Naive thymus-derived CD4-positive, alpha-beta T cell (primary cell): ENCODE measurements at regions of chr17 and their contacts with region 1.

Region 1: GRCh38 chr17:4625181-4625617 is 16.3 kb downstream of the ALOX15 start:
- DNase-seq: no peak
- ATAC-seq: no peak
- H3K4me3 ChIP-seq: no peak overlapping the region
- H3K4me3 Mint-ChIP-seq: no peak overlapping the region
- H3K27ac ChIP-seq: no peak overlapping the region
- H3K27ac Mint-ChIP-seq: no peak overlapping the region
- H3K4me1 ChIP-seq: no peaks in the 10 kb centered on the region
- H3K4me1 Mint-ChIP-seq: peaks cover 0 to 4% (median 0%) of the 10 kb centered on the region in 7 donors
- H3K27me3 ChIP-seq: no peaks in the 10 kb centered on the region
- H3K27me3 Mint-ChIP-seq: peaks cover 0 to 34% (median 5%) of the 10 kb centered on the region in 5 donors

Region 2: DNA sequence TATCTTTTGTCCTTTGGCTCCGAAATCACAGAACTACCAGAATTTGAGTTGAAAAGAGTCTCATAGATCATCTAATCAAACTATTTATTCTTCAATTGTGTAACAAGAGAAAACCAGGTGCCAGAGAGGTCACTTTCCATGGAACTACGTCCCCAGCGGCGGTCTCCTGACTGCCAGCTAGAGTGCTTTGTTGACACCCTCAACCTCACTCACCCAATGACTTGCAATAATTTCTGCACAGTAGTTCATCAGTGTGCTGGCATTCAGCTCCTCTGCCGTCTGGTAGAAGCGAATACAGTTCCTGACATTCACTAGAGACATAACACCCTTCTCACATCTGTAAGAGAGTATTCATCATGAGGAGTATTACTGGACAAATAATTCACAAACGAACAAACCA is 415.6 kb before region 1 on chr17:
- CTCF ChIA-PET with region 1: no interaction called
- POLR2A ChIA-PET with region 1: no interaction called
- intact Hi-C with region 1: loop called in 1 of 2 experiments (anchors 5 kb)
- DNase-seq: no peak
- ATAC-seq: no peak
- H3K4me3 ChIP-seq: no peak overlapping the region
- H3K4me3 Mint-ChIP-seq: no peak overlapping the region
- H3K27ac ChIP-seq: no peak overlapping the region
- H3K27ac Mint-ChIP-seq: no peak overlapping the region
- H3K4me1 ChIP-seq: no peaks in the 10 kb centered on the region
- H3K4me1 Mint-ChIP-seq: peaks cover 3 to 15% (median 8%) of the 10 kb centered on the region in 7 donors
- H3K27me3 ChIP-seq: no peaks in the 10 kb centered on the region
- H3K27me3 Mint-ChIP-seq: no peaks in the 10 kb centered on the region

Region 3: DNA sequence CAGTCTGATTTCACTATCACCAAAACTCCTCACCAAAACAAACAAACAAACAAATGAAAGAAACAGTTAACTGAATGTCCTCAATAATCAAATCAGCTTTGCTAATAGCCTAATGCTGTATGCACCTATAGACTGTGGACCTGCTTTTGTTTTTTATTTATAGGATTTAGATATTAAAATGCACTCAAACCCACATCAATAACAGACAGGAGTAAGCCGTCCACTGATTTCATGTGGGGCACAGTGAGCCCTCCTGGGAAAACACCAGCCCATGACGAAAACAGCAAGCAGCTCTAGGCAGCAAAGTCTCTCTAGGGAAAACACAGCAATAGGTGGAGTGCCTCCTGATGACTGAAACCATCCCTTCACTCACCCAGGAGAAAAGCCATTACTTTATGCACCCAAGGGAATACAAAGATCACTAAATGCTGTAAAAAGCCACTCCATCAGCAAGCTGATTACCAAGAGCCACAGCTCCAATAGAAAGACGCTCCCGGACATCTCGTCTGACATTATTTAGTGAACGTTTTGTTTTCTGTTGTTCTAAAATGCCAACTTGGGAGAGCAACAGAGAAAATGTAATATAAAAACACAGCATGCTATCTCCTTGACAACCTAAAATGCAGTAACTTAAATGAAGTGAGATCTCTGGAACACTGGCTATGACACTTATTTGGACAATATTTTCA is 409.2 kb before region 1 on chr17:
- CTCF ChIA-PET with region 1: no interaction called
- POLR2A ChIA-PET with region 1: no interaction called
- intact Hi-C with region 1: loop called (anchors 5 kb)
- DNase-seq: no peak
- ATAC-seq: no peak
- H3K4me3 ChIP-seq: no peak overlapping the region
- H3K4me3 Mint-ChIP-seq: no peak overlapping the region
- H3K27ac ChIP-seq: no peak overlapping the region
- H3K27ac Mint-ChIP-seq: peak overlapping the region in 5 of 9 donors; percentile 3 to 82 (median 75)
- H3K4me1 ChIP-seq: no peaks in the 10 kb centered on the region
- H3K4me1 Mint-ChIP-seq: peaks cover 7 to 13% (median 11%) of the 10 kb centered on the region in 7 donors
- H3K27me3 ChIP-seq: no peaks in the 10 kb centered on the region
- H3K27me3 Mint-ChIP-seq: no peaks in the 10 kb centered on the region

Region 4: GRCh38 chr17:4420692-4421131 is 204.5 kb before region 1 on chr17:
- CTCF ChIA-PET with region 1: interaction called, 11 read pairs
- POLR2A ChIA-PET with region 1: interaction called, 3 read pairs
- intact Hi-C with region 1: loop called in 1 of 2 experiments (anchors 1 kb)
- DNase-seq: peak in 8 of 9 donors; percentile 34 to 75 (median 66)
- ATAC-seq: peak; percentile 96
- H3K4me3 ChIP-seq: no peak overlapping the region
- H3K4me3 Mint-ChIP-seq: no peak overlapping the region
- H3K27ac ChIP-seq: no peak overlapping the region
- H3K27ac Mint-ChIP-seq: no peak overlapping the region
- H3K4me1 ChIP-seq: peaks cover 0 to 4% of the 10 kb centered on the region in 2 donors
- H3K4me1 Mint-ChIP-seq: peaks cover 0 to 3% (median 0%) of the 10 kb centered on the region in 7 donors
- H3K27me3 ChIP-seq: no peaks in the 10 kb centered on the region
- H3K27me3 Mint-ChIP-seq: peaks cover 0 to 6% (median 0%) of the 10 kb centered on the region in 5 donors

Region 5: GRCh38 chr17:4498461-4499397 is 126.5 kb before region 1 on chr17 and contains the start of gene SPNS2:
- CTCF ChIA-PET with region 1: interaction called, 4 read pairs
- POLR2A ChIA-PET with region 1: no interaction called
- intact Hi-C with region 1: loop called in 1 of 2 experiments (anchors 10 kb)
- DNase-seq: peak; percentile 46 to 74 (median 66)
- ATAC-seq: peak; percentile 96
- H3K4me3 ChIP-seq: peak within 1 kb of the TSS; percentile 48
- H3K4me3 Mint-ChIP-seq: peak within 1 kb of the TSS; percentile 77 to 92 (median 84)
- H3K27ac ChIP-seq: no peak within 1 kb of the TSS
- H3K27ac Mint-ChIP-seq: no peak within 1 kb of the TSS
- H3K4me1 ChIP-seq: peaks cover 15 to 17% of the 10 kb centered on the region in 2 donors
- H3K4me1 Mint-ChIP-seq: peaks cover 13 to 26% (median 23%) of the 10 kb centered on the region in 7 donors
- H3K27me3 ChIP-seq: peaks cover 0 to 14% of the 10 kb centered on the region in 2 donors
- H3K27me3 Mint-ChIP-seq: peaks cover 15 to 52% (median 26%) of the 10 kb centered on the region in 5 donors
- total RNA-seq, gene SPNS2: 0.19 to 0.56 (median 0.50) TPM in 4 of 5 experiments, not detected in the other

Region 6: GRCh38 chr17:4565209-4566141 is 59.7 kb before region 1 on chr17:
- CTCF ChIA-PET with region 1: interaction called, 4 read pairs
- POLR2A ChIA-PET with region 1: no interaction called
- intact Hi-C with region 1: loop called (anchors 1 kb)
- DNase-seq: peak in 8 of 9 donors; percentile 29 to 60 (median 50)
- ATAC-seq: peak; percentile 90
- H3K4me3 ChIP-seq: no peak overlapping the region
- H3K4me3 Mint-ChIP-seq: peak overlapping the region in 9 of 10 donors; percentile 44 to 77 (median 70)
- H3K27ac ChIP-seq: no peak overlapping the region
- H3K27ac Mint-ChIP-seq: peak overlapping the region in 3 of 9 donors; percentile 15 to 41 (median 21)
- H3K4me1 ChIP-seq: peaks cover 7 to 11% of the 10 kb centered on the region in 2 donors
- H3K4me1 Mint-ChIP-seq: peaks cover 15 to 40% (median 33%) of the 10 kb centered on the region in 7 donors
- H3K27me3 ChIP-seq: no peaks in the 10 kb centered on the region
- H3K27me3 Mint-ChIP-seq: peaks cover 0 to 17% (median 0%) of the 10 kb centered on the region in 5 donors

Region 7: DNA sequence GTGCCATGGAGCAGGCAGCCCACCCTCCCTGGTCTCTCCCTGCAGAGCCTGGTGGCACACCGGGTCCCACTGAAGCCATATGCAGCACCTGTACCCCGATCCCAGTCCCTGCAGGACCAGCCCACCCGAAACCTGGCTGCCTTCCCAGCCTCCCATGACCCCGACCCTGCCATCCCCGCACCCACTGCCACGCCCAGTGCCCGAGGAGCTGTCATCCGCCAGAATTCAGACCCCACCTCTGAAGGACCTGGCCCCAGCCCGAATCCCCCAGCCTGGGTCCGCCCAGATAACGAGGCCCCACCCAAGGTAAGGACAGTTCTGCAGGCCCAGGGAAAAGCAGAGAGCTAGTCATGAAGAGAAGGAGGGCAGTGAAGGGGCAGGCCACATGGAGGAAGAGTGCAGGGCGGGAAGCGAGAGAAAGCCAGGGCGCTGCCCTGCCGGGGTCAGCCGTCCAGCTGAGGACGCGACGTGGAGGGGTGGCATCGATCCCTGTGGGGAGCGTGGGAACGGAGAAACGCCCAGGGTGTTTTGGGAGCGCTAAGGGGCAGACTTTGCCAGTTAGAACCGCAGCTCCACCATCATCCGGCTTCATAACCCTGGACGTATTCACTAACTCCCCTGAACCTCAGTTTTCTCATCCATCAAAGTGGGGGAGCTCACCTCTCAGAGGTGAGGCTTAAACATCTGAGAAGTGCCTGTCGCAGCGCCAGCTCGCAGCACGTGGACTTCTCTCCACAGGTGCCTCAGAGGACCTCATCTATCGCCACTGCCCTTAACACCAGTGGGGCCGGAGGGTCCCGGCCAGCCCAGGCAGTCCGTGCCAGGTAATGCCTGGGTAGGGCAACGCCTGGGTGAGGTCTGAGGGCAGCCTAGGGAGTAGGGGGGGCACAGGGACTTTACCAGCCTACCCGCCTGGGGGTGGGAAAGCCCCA is 266.5 kb after region 1 on chr17:
- CTCF ChIA-PET with region 1: no interaction called
- POLR2A ChIA-PET with region 1: no interaction called
- intact Hi-C with region 1: loop called in 1 of 2 experiments (anchors 1 kb)
- DNase-seq: no peak
- ATAC-seq: no peak
- H3K4me3 ChIP-seq: no peak overlapping the region
- H3K4me3 Mint-ChIP-seq: no peak overlapping the region
- H3K27ac ChIP-seq: no peak overlapping the region
- H3K27ac Mint-ChIP-seq: no peak overlapping the region
- H3K4me1 ChIP-seq: no peaks in the 10 kb centered on the region
- H3K4me1 Mint-ChIP-seq: peaks cover 0 to 5% (median 2%) of the 10 kb centered on the region in 7 donors
- H3K27me3 ChIP-seq: no peaks in the 10 kb centered on the region
- H3K27me3 Mint-ChIP-seq: no peaks in the 10 kb centered on the region